IMR-90 (cell line): ENCODE measurements at regions of chr15 and their contacts with region 1.

Region 1: DNA sequence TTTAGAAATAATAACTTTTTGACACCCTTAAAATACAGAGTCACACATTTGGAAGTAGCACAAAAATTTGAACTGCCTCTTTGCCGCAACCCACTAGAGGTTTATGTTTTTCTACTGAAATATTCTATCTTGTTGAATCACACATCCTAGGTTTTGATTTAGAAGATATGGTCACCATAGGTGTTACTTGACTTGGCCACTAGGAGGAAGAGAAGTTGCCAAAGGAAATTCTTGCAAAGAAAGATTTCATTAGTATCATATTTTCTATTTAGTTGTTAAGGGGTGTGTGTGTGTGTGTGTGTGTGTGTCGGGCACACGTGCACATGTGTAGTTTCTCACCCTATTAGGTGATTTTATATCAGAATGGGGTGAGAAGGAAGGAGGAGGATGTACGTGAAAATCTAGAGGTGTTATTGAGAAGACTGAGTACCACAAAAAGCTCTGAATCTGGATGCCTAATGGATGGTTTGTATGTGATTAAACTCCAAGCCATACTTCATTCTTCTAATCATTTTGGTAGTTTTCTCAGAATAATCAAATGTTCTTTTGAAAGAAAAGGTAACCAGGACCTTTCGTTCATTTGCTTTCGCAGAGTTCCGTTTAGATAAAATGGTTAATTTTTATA is 31.5 kb downstream of the ZFAND6 start:
- DNase-seq: no peak
- ATAC-seq: no peak
- H3K4me3 ChIP-seq: no peak overlapping the region
- H3K27ac ChIP-seq: no peak overlapping the region
- H3K4me1 ChIP-seq: peaks cover 1% of the 10 kb centered on the region; the same call in 1 of the 2 replicates
- H3K27me3 ChIP-seq: no peaks in the 10 kb centered on the region
- CTCF ChIP-seq: peak; percentile 36
- POLR2A ChIP-seq: no peak
- RAD21 ChIP-seq: no peak

Region 2: DNA sequence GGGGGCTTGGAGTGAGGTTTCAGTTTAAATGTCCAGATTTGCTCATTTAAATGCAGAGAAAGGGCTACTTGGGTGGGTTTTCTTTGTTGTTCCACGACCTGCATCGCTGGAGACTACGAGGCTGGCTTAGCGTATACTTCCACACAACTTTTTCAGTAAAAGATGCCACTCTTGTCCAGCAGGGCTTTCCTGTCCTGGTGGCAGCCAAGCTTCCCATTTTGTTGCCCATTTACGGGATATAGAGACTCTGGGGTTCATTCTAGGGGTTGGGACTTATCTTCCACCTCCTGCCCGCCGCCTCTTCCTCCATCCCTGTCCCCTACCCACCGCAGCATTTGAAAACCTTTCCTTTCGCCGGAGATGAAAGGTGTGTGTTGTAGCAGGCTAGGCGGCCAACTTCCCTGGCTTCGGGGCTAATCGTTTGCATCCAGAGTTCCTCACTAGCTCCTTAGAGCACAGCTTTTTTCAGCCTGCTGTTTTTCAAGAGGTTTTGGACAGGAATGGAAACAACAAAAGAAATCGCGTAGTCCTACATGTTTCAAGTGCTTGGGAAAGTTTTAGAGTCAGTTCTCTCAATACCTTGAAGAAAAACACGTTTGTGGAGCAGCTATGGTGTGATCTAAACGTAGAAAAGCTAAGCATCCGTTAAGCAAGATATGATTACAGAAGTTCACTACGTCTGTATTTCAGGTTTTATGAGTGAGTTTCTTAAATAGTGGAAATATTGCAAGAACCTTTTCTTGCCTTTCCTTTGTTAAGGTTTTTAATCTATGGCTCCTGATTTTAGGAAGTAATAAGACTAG is 1524.8 kb before region 1 on chr15:
- CTCF ChIA-PET with region 1: no interaction called
- POLR2A ChIA-PET with region 1: no interaction called
- dilution Hi-C with region 1: no loop called
- in situ Hi-C with region 1: no loop called
- intact Hi-C with region 1: no loop called
- DNase-seq: peak; percentile 3
- ATAC-seq: peak; percentile 35
- H3K4me3 ChIP-seq: peak overlapping the region; percentile 54
- H3K27ac ChIP-seq: no peak overlapping the region
- H3K4me1 ChIP-seq: no peaks in the 10 kb centered on the region
- H3K27me3 ChIP-seq: peaks cover 17% of the 10 kb centered on the region
- CTCF ChIP-seq: no peak
- POLR2A ChIP-seq: no peak
- RAD21 ChIP-seq: no peak

Region 3: GRCh38 chr15:80114114-80114513 is 23.1 kb after region 1 on chr15:
- CTCF ChIA-PET with region 1: interaction called, 3 read pairs
- POLR2A ChIA-PET with region 1: no interaction called
- dilution Hi-C with region 1: no loop called
- in situ Hi-C with region 1: no loop called
- intact Hi-C with region 1: loop called (anchors 1 kb)
- DNase-seq: no peak
- ATAC-seq: no peak
- H3K4me3 ChIP-seq: no peak overlapping the region
- H3K27ac ChIP-seq: no peak overlapping the region
- H3K4me1 ChIP-seq: peaks cover 4% of the 10 kb centered on the region; the same call in 1 of the 2 replicates
- H3K27me3 ChIP-seq: no peaks in the 10 kb centered on the region
- CTCF ChIP-seq: no peak
- POLR2A ChIP-seq: no peak
- RAD21 ChIP-seq: no peak

Region 4: DNA sequence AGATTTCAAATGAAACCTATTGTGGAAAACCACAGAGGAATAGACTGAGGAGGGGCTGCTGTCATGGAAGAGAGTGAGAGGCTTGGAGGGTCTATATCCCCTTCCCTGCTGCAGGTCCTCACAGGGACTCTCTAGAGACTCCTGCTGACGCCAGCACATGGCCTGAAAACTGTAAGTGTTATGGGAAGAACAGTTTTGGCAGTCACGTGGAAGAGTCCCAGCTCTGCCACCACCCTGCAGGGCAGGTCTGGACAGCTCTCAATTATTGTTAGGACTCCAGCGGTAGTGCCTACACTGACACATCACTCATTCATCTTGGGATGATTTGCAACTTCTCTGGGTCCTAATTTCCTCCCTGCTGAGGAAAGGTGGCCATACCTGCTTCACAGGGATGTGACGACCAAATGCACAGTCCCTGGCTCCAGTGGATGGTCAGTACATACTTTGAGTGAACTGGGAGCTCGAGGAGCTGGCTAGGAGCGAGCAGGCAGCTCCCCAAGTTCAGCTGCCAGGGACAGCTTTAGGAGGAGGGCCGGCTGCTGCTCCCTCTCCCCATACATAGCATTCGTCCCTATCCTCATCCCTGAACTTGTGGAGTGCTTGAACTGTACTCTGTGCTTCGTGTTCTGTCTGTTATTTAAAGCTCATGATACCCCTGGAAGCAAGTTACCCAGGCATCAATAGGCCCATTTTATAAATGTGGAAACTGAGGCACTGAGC is 111.8 kb after region 1 on chr15:
- CTCF ChIA-PET with region 1: no interaction called
- POLR2A ChIA-PET with region 1: no interaction called
- dilution Hi-C with region 1: no loop called
- in situ Hi-C with region 1: no loop called
- intact Hi-C with region 1: no loop called
- DNase-seq: no peak
- ATAC-seq: no peak
- H3K4me3 ChIP-seq: no peak overlapping the region
- H3K27ac ChIP-seq: no peak overlapping the region
- H3K4me1 ChIP-seq: no peaks in the 10 kb centered on the region
- H3K27me3 ChIP-seq: peaks cover 25% of the 10 kb centered on the region
- CTCF ChIP-seq: no peak
- POLR2A ChIP-seq: no peak
- RAD21 ChIP-seq: no peak